IMR-90 (cell line): ENCODE measurements at regions of chrX and their contacts with region 1.

Region 1: DNA sequence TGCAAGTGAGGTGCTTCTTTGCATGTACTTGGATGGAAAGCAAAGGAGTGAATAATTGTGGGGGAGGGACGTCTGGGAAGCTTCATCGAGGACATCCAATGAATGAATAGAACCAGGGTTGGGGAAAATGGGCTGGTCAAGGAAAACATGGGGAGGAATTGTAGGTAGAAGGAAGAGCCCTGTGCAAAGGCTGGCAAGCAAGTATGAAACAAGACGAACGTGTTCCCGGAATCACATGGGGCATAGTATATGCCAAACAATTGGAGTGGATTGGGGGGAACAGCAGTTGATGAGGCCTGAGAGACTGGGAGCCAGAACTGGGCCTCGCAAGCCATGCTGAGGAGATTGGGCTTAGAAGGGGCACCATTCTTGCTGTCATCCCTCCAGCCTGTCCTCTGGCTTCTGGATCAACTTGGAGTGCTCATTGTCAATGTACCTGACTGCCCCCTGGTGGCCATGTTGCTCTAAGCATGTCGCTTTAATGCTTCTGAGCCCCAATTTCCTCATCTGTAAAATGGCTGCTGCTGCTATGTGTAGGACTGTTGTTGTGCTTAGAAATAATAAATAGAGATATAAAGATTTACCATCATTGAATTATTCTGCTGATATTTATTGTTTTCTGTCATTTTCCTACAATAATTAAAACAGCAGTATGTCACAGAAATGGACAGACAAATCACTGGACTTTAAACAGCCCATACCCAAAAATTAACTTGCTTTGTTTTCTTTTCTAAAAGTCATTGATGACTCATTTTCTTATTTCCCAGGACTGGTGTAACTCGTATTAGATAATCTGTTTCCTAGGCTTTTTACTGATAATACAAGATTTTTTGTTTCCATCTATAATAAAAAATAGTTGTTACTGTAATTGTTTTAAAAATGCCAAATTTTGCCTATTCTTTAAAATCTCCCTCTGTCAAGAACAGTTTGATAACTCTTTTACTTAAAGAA is 66.4 kb downstream of the JADE3 start:
- DNase-seq: peak; percentile 81
- ATAC-seq: peak; percentile 76
- H3K4me3 ChIP-seq: no peak overlapping the region
- H3K27ac ChIP-seq: peak overlapping the region; percentile 74; the same call in 1 of the 2 replicates
- H3K4me1 ChIP-seq: peaks cover 5% of the 10 kb centered on the region; the same call in 1 of the 2 replicates
- H3K27me3 ChIP-seq: 0 out of 2 replicates have a peak, but pooled peaks cover 2% of the 10 kb centered on the region
- CTCF ChIP-seq: peak; percentile 58
- POLR2A ChIP-seq: no peak
- RAD21 ChIP-seq: peak; percentile 50

Region 2: GRCh38 chrX:46836701-46837557 is 141.7 kb before region 1 on chrX and contains the start of gene RP2:
- CTCF ChIA-PET with region 1: interaction called, 3 read pairs
- POLR2A ChIA-PET with region 1: no interaction called
- dilution Hi-C with region 1: no loop called
- in situ Hi-C with region 1: no loop called
- intact Hi-C with region 1: loop called (anchors 5 kb)
- DNase-seq: peak; percentile 92
- ATAC-seq: peak; percentile 95
- H3K4me3 ChIP-seq: peak within 1 kb of the TSS; percentile 86
- H3K27ac ChIP-seq: peak within 1 kb of the TSS; percentile 80
- H3K4me1 ChIP-seq: 0 out of 2 replicates have a peak, but pooled peaks cover 2% of the 10 kb centered on the region
- H3K27me3 ChIP-seq: no peaks in the 10 kb centered on the region
- CTCF ChIP-seq: no peak
- POLR2A ChIP-seq: peak; percentile 72
- RAD21 ChIP-seq: no peak
- total RNA-seq, gene RP2: 17.0 and 23.9 TPM in 2 replicates

Region 3: GRCh38 chrX:46898207-46898606 is 80.4 kb before region 1 on chrX:
- CTCF ChIA-PET with region 1: no interaction called
- POLR2A ChIA-PET with region 1: no interaction called
- dilution Hi-C with region 1: no loop called
- in situ Hi-C with region 1: no loop called
- intact Hi-C with region 1: no loop called
- DNase-seq: no peak
- ATAC-seq: no peak
- H3K4me3 ChIP-seq: no peak overlapping the region
- H3K27ac ChIP-seq: no peak overlapping the region
- H3K4me1 ChIP-seq: no peaks in the 10 kb centered on the region
- H3K27me3 ChIP-seq: peaks cover 4% of the 10 kb centered on the region
- CTCF ChIP-seq: no peak
- POLR2A ChIP-seq: no peak
- RAD21 ChIP-seq: no peak

Region 4: GRCh38 chrX:46912098-46912602 is 66.5 kb before region 1 on chrX and contains the start of gene JADE3:
- CTCF ChIA-PET with region 1: no interaction called
- POLR2A ChIA-PET with region 1: no interaction called
- dilution Hi-C with region 1: no loop called
- in situ Hi-C with region 1: no loop called
- intact Hi-C with region 1: loop called (anchors 1 kb)
- DNase-seq: peak; percentile 56
- ATAC-seq: peak; percentile 87
- H3K4me3 ChIP-seq: peak within 1 kb of the TSS; percentile 91
- H3K27ac ChIP-seq: peak within 1 kb of the TSS; percentile 7; the same call in 1 of the 2 replicates
- H3K4me1 ChIP-seq: no peaks in the 10 kb centered on the region
- H3K27me3 ChIP-seq: peaks cover 9% of the 10 kb centered on the region
- CTCF ChIP-seq: no peak
- POLR2A ChIP-seq: no peak
- RAD21 ChIP-seq: no peak
- total RNA-seq, gene JADE3: 4.4 and 4.7 TPM in 2 replicates